Naive thymus-derived CD4-positive, alpha-beta T cell (primary cell): ENCODE measurements at regions of chr2 and their contacts with region 1.

Region 1: DNA sequence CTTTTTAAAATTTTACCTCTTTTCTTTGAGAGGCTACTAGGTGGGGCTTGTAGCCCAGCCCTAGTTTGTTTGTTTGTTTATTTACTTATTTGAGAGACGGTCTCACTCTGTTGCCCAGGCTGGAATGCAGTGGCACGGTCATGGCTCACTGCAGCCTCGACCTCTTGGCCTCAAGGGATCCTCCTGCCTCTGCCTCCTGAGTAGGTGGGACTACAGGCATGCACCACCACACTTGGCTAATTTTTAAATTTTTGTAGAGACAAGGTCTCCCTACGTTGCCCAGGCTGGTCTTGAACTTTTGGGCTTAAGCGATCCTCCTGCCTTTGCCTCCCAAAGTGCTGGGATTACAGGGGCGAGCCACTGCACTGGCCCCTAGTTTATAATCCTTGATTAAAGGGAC is 35.0 kb downstream of the ERLEC1 start:
- DNase-seq: no peak
- ATAC-seq: no peak
- H3K4me3 ChIP-seq: no peak overlapping the region
- H3K4me3 Mint-ChIP-seq: no peak overlapping the region
- H3K27ac ChIP-seq: no peak overlapping the region
- H3K27ac Mint-ChIP-seq: no peak overlapping the region
- H3K4me1 ChIP-seq: no peaks in the 10 kb centered on the region
- H3K4me1 Mint-ChIP-seq: no peaks in the 10 kb centered on the region
- H3K27me3 ChIP-seq: no peaks in the 10 kb centered on the region
- H3K27me3 Mint-ChIP-seq: no peaks in the 10 kb centered on the region

Region 2: DNA sequence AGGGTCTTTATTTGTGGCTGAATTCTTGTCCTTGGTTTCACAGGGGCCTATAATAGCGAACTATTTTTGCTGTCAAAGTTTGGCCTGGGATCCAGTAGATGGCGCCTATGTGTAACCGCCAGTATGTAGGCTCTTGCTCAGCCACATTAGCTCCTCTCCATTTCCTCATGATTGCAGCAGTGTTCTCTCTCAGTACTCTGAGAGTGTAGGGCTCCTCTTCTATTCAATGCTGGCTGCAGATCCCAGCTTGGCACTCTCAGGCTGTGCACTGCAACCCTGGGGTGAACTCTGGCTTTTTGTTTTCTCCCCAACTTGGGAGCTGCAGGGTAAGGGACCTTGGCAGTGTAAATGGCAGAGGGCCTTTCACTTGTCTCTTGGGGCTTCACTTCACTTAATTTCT is 398.8 kb before region 1 on chr2:
- CTCF ChIA-PET with region 1: no interaction called
- POLR2A ChIA-PET with region 1: no interaction called
- intact Hi-C with region 1: loop called in 1 of 2 experiments (anchors 2 kb)
- DNase-seq: no peak
- ATAC-seq: no peak
- H3K4me3 ChIP-seq: no peak overlapping the region
- H3K4me3 Mint-ChIP-seq: no peak overlapping the region
- H3K27ac ChIP-seq: no peak overlapping the region
- H3K27ac Mint-ChIP-seq: no peak overlapping the region
- H3K4me1 ChIP-seq: no peaks in the 10 kb centered on the region
- H3K4me1 Mint-ChIP-seq: no peaks in the 10 kb centered on the region
- H3K27me3 ChIP-seq: no peaks in the 10 kb centered on the region
- H3K27me3 Mint-ChIP-seq: peaks cover 0 to 13% (median 4%) of the 10 kb centered on the region in 5 donors